H1 (cell line): ENCODE measurements at regions of chr11 and their contacts with region 1.

Region 1: DNA sequence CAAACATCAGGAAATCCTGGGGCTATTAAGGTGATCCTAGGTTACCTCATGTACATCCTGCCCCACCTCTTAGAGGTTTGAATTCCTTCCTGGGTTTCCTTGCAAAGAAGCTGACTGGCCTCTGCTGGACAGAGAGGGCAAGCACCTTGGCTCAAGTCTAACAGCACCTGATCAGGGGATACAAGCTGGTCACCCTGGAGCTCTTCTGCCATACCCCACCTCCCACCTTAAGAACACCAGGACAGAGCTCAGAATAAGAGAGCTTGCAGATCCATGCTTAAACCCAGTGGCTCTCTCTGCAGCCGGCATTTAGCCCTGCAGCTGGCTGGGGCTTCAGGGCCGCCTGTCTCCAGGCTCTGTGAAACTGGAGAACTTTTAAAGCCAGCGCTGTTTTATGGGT is 386.6 kb upstream of the NARS2 start:
- DNase-seq: peak; percentile 56 to 57
- H3K4me3 ChIP-seq: peak overlapping the region; percentile 40 to 74 (median 44); a peak in 7 of 8 replicates
- H3K27ac ChIP-seq: no peak overlapping the region
- H3K4me1 ChIP-seq: peaks cover 2 to 6% (median 4%) of the 10 kb centered on the region in 4 experiments; a peak in 3 of 7 replicates
- H3K27me3 ChIP-seq: peaks cover 0 to 7% (median 0%) of the 10 kb centered on the region in 4 experiments; a peak in 4 of 7 replicates
- CTCF ChIP-seq: peak; percentile 78 to 92 (median 89)
- EP300 ChIP-seq: no peak
- POLR2A ChIP-seq: no peak
- RAD21 ChIP-seq: peak; percentile 97 to 99

Region 2: DNA sequence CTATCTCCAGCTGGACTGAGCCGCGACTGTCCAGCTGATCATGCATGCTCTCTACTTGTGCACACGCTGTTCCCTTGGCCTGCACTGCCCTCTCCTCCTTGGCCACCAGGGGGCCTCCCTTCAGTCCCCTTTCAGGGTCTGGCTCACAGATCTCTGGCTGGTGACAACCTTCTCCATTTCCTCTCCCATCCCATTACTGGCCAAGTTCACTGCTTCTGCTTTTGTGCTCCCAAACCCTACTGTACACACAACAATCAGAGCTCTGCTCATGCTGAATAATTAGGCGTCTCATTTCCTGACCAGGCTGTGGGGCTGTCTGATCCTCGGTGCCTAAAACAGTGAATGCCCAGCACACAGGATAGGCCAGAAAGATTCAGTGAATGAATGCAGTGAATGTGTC is 162.6 kb before region 1 on chr11:
- CTCF ChIA-PET with region 1: interaction called, 187 read pairs
- POLR2A ChIA-PET with region 1: interaction called, 5 read pairs
- DNase-seq: peak; percentile 34 to 86
- H3K4me3 ChIP-seq: no peak overlapping the region
- H3K27ac ChIP-seq: no peak overlapping the region
- H3K4me1 ChIP-seq: peaks cover 0 to 17% (median 10%) of the 10 kb centered on the region in 4 experiments; a peak in 5 of 7 replicates
- H3K27me3 ChIP-seq: no peaks in the 10 kb centered on the region
- CTCF ChIP-seq: peak; percentile 81 to 97 (median 95)
- EP300 ChIP-seq: no peak
- POLR2A ChIP-seq: no peak
- RAD21 ChIP-seq: peak; percentile 76 to 86

Region 3: GRCh38 chr11:78840200-78840599 is 121.0 kb before region 1 on chr11:
- CTCF ChIA-PET with region 1: interaction called, 32 read pairs
- POLR2A ChIA-PET with region 1: interaction called, 3 read pairs
- DNase-seq: no peak
- H3K4me3 ChIP-seq: no peak overlapping the region
- H3K27ac ChIP-seq: no peak overlapping the region
- H3K4me1 ChIP-seq: no peaks in the 10 kb centered on the region
- H3K27me3 ChIP-seq: peaks cover 0 to 1% (median 0%) of the 10 kb centered on the region in 4 experiments; a peak in 1 of 7 replicates
- CTCF ChIP-seq: no peak
- EP300 ChIP-seq: no peak
- POLR2A ChIP-seq: no peak
- RAD21 ChIP-seq: no peak

Region 4: DNA sequence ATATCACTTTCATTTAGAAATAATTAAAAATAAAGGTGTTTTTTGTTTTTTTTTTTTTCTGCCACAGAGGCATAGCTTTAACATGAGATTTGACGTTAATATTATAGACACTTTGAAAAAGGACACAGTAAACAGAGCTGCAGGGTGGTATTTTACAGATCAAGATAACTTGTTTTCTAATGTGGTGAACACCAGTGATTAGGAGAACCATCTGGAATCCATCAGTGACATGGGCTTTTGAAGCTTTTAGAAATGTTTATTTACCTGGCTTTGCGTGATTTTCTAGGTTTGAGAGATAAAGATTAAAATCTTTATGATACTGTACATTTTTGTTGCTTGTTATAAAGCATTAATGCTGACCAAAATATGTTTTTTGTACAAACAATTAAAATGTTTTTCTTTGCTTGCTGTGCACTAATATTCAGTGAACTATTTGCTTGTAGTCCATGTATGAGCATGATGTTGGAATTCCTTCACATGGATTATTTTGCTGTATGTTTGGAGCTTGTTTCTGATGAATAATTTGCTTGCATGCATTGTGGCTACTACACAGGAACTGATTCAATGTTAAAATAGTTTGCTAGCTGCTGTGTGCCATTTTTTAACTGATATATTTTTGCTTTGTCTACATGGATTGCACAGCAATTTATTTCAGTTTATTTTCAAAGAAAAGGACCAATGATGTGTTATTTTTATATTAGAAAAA is 34.5 kb before region 1 on chr11:
- CTCF ChIA-PET with region 1: interaction called, 10 read pairs
- POLR2A ChIA-PET with region 1: no interaction called
- DNase-seq: no peak
- H3K4me3 ChIP-seq: no peak overlapping the region
- H3K27ac ChIP-seq: no peak overlapping the region
- H3K4me1 ChIP-seq: peaks cover 8 to 22% (median 18%) of the 10 kb centered on the region in 4 experiments; a peak in 6 of 7 replicates
- H3K27me3 ChIP-seq: peaks cover 22 to 46% (median 44%) of the 10 kb centered on the region in 4 experiments
- CTCF ChIP-seq: no peak
- EP300 ChIP-seq: no peak
- POLR2A ChIP-seq: no peak
- RAD21 ChIP-seq: no peak

Region 5: DNA sequence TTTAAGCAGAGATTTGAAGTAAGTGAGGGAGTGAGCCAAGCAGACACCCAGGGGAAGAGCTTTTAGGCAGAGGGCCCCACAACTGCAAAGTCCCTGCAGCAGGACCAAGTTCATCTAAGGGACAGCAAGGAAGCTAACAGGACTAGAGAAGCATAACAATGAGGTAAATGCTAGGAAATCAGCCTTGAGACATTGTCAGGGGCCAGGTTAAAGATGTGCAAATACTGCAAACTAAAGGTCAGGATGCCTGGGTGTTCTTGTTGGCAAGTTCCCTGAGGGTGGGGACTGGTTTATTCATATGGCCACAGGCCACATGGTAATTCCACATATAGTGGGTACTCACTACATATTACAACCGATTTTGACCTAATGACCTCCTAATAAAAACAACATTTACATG is 12.6 kb after region 1 on chr11:
- CTCF ChIA-PET with region 1: interaction called, 11 read pairs
- POLR2A ChIA-PET with region 1: no interaction called
- DNase-seq: no peak
- H3K4me3 ChIP-seq: no peak overlapping the region
- H3K27ac ChIP-seq: no peak overlapping the region
- H3K4me1 ChIP-seq: peaks cover 0 to 4% (median 0%) of the 10 kb centered on the region in 4 experiments; a peak in 1 of 7 replicates
- H3K27me3 ChIP-seq: no peaks in the 10 kb centered on the region
- CTCF ChIP-seq: no peak
- EP300 ChIP-seq: no peak
- POLR2A ChIP-seq: no peak
- RAD21 ChIP-seq: no peak